Transverse colon (tissue), 4 donors: ENCODE measurements at regions of chr22 and their contacts with region 1.

Region 1: DNA sequence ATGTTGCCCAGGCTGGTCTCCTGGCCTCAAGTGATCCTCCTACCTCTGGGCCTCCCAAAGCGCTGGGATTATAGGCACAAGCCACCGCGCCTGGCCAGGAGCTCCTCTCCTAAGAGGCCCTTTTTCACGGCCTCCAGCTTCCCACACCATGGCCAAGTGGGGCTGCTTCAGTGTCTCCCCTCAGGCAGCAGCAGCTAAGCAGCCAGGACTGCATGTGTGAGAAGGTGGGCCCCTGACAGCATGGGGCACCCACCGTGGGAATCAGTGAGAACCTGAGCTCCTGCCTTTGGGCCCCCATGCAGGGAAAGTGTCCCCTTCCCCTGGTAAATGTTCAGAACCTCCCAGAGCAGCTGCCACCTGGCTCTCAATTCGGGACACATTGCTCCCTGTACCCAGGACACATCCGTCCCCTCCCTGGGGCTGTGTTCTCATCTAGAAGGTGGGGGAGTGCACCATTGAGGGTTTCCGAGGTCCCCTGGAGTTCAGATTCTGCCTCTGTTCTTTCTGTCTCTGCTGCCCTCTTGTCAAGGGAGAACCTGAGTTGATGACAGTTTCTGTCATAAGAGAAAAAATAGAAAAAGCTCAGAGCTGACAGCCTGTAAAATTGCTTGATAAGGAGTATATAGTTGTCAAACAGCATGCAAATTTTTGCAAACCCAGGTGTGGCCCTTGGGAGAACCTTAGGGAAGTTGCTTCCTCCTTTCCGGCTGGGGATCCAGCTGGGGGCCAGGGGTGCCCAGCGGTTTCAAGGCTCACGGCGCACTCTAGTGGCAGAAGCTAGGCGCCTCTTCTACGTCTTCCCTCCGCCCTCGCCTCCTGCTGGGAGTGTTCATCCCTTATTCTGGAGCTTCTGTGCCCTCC is 29.7 kb downstream of the FAM83F start:
- DNase-seq: peak; percentile 82
- H3K4me3 ChIP-seq: no peak overlapping the region
- H3K27ac ChIP-seq: peak overlapping the region in 2 of 4 donors; percentile 21 to 23
- H3K4me1 ChIP-seq: peaks cover 4 to 23% (median 5%) of the 10 kb centered on the region in 4 donors
- H3K27me3 ChIP-seq: no peaks in the 10 kb centered on the region
- CTCF ChIP-seq: peak; percentile 71 to 91 (median 83)
- EP300 ChIP-seq: no peak
- POLR2A ChIP-seq: no peak

Region 2: GRCh38 chr22:39622881-39623367 is 401.5 kb before region 1 on chr22:
- in situ Hi-C with region 1: loop called in 1 of 4 experiments (anchors 10 kb)
- intact Hi-C with region 1: loop called (anchors 10 kb)
- DNase-seq: peak; percentile 71
- H3K4me3 ChIP-seq: no peak overlapping the region
- H3K27ac ChIP-seq: no peak overlapping the region
- H3K4me1 ChIP-seq: no peaks in the 10 kb centered on the region
- H3K27me3 ChIP-seq: peaks cover 35% of the 10 kb centered on the region
- CTCF ChIP-seq: peak; percentile 39 to 70 (median 50)
- EP300 ChIP-seq: no peak
- POLR2A ChIP-seq: no peak

Region 3: GRCh38 chr22:39960791-39961746 is 63.4 kb before region 1 on chr22:
- in situ Hi-C with region 1: no loop called
- intact Hi-C with region 1: no loop called
- DNase-seq: peak; percentile 49
- H3K4me3 ChIP-seq: no peak overlapping the region
- H3K27ac ChIP-seq: peak overlapping the region in 2 of 4 donors; percentile 4 to 38
- H3K4me1 ChIP-seq: peaks cover 0 to 7% (median under 1%) of the 10 kb centered on the region in 4 donors
- H3K27me3 ChIP-seq: no peaks in the 10 kb centered on the region
- CTCF ChIP-seq: no peak
- EP300 ChIP-seq: no peak
- POLR2A ChIP-seq: no peak